Panc1 (cell line): ENCODE measurements at regions of chr12 and their contacts with region 1.

Region 1: DNA sequence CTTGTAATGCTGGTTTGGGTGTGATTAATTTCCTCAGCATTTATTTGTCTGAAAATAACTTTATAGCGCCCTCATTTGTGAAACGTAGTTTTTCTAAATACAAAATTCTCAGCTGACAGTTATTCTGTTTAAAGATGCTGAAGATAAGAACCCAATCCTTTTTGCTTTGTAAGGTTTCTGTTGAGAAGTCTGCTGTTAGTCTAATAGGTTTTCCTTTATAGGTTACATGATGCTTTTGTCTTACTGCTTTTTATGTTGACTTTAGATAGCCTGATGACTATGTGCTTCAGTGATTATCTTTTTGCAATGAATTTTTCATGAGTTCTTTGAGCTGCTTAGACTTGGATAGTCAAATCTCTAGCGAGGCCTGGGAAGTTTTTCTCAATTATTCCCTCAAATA is 168.6 kb upstream of the PDE3A start:
- DNase-seq: no peak
- ATAC-seq: no peak
- H3K4me3 ChIP-seq: no peak overlapping the region
- H3K27ac ChIP-seq: no peak overlapping the region
- H3K4me1 ChIP-seq: no peaks in the 10 kb centered on the region
- H3K27me3 ChIP-seq: no peaks in the 10 kb centered on the region
- CTCF ChIP-seq: no peak

Region 2: DNA sequence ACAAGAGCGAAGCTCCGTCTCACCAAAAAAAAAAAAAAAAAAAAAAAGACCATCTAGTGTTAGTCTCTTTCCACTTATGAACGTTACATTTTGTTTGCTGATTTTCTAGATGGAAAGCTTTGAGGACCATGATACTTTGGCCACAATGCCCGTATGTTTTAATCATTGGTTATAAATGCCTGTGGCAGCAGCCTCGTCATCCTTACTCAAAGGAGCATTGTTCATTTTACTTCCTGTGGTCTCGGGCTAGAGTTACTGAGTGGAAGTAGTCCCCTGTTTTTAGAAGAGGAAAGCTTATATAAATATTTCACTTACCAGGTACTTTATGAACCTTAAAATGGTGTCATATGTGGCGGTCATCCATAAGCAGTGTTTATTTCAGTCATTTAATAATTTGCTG is 400.6 kb before region 1 on chr12:
- CTCF ChIA-PET with region 1: interaction called, 11 read pairs
- POLR2A ChIA-PET with region 1: no interaction called
- in situ Hi-C with region 1: no loop called
- intact Hi-C with region 1: no loop called
- DNase-seq: no peak
- ATAC-seq: no peak
- H3K4me3 ChIP-seq: no peak overlapping the region
- H3K27ac ChIP-seq: no peak overlapping the region
- H3K4me1 ChIP-seq: no peaks in the 10 kb centered on the region
- H3K27me3 ChIP-seq: no peaks in the 10 kb centered on the region
- CTCF ChIP-seq: no peak

Region 3: GRCh38 chr12:20183563-20183962 is 16.2 kb before region 1 on chr12:
- CTCF ChIA-PET with region 1: no interaction called
- POLR2A ChIA-PET with region 1: no interaction called
- in situ Hi-C with region 1: no loop called
- intact Hi-C with region 1: no loop called
- DNase-seq: no peak
- ATAC-seq: no peak
- H3K4me3 ChIP-seq: no peak overlapping the region
- H3K27ac ChIP-seq: no peak overlapping the region
- H3K4me1 ChIP-seq: no peaks in the 10 kb centered on the region
- H3K27me3 ChIP-seq: no peaks in the 10 kb centered on the region
- CTCF ChIP-seq: no peak

Region 4: GRCh38 chr12:20451761-20452160 is 252.0 kb after region 1 on chr12:
- CTCF ChIA-PET with region 1: no interaction called
- POLR2A ChIA-PET with region 1: no interaction called
- in situ Hi-C with region 1: no loop called
- intact Hi-C with region 1: no loop called
- DNase-seq: no peak
- ATAC-seq: no peak
- H3K4me3 ChIP-seq: no peak overlapping the region
- H3K27ac ChIP-seq: no peak overlapping the region
- H3K4me1 ChIP-seq: no peaks in the 10 kb centered on the region
- H3K27me3 ChIP-seq: no peaks in the 10 kb centered on the region
- CTCF ChIP-seq: no peak